ENCODE measurements at regions of chr7 and their contacts with region 1.

Region 1: GRCh38 chr7:43260980-43261878 is 148.8 kb downstream of the HECW1 start:
- DNase-seq: peak; percentile 75 to 84 (median 78)
- H3K4me3 ChIP-seq: no peak overlapping the region
- H3K27ac ChIP-seq: no peak overlapping the region
- H3K4me1 ChIP-seq: no peaks in the 10 kb centered on the region
- H3K27me3 ChIP-seq: peaks cover 0 to 6% (median 3%) of the 10 kb centered on the region in 5 experiments

Region 2: GRCh38 chr7:42940985-42941847 is 320.0 kb before region 1 on chr7:
- CTCF ChIA-PET with region 1: interaction called, 17 read pairs
- POLR2A ChIA-PET with region 1: no interaction called
- DNase-seq: peak; percentile 70 to 86 (median 80)
- H3K4me3 ChIP-seq: no peak overlapping the region
- H3K27ac ChIP-seq: no peak overlapping the region
- H3K4me1 ChIP-seq: peaks cover 0 to 10% (median 7%) of the 10 kb centered on the region in 4 experiments
- H3K27me3 ChIP-seq: no peaks in the 10 kb centered on the region

Region 3: GRCh38 chr7:43248961-43249822 is 12.0 kb before region 1 on chr7:
- CTCF ChIA-PET with region 1: interaction called, 13 read pairs
- POLR2A ChIA-PET with region 1: no interaction called
- DNase-seq: no peak
- H3K4me3 ChIP-seq: no peak overlapping the region
- H3K27ac ChIP-seq: no peak overlapping the region
- H3K4me1 ChIP-seq: no peaks in the 10 kb centered on the region
- H3K27me3 ChIP-seq: peaks cover 2 to 6% (median 3%) of the 10 kb centered on the region in 5 experiments

Measured in common myeloid progenitor, CD34-positive (primary cell).